Sigmoid colon (tissue), 7 donors: ENCODE measurements at regions of chr9 and their contacts with region 1.

Region 1: GRCh38 chr9:70484210-70485130 is 70.0 kb upstream of the KLF9 start:
- DNase-seq: peak; percentile 80
- H3K4me3 ChIP-seq: no peak overlapping the region
- H3K27ac ChIP-seq: peak overlapping the region; percentile 67 to 98 (median 92)
- H3K4me1 ChIP-seq: peaks cover 4 to 88% (median 76%) of the 10 kb centered on the region in 4 donors
- H3K27me3 ChIP-seq: no peaks in the 10 kb centered on the region
- CTCF ChIP-seq: peak in 3 of 4 experiments; percentile 73 to 85 (median 81)
- EP300 ChIP-seq: peak in 1 of 4 donors; percentile 15
- POLR2A ChIP-seq: no peak

Region 2: GRCh38 chr9:69186841-69187611 is 1297.4 kb before region 1 on chr9:
- intact Hi-C with region 1: no loop called
- DNase-seq: no peak
- H3K4me3 ChIP-seq: no peak overlapping the region
- H3K27ac ChIP-seq: peak overlapping the region in 3 of 4 donors; percentile 31 to 80 (median 41)
- H3K4me1 ChIP-seq: peaks cover 2 to 39% (median 23%) of the 10 kb centered on the region in 4 donors
- H3K27me3 ChIP-seq: no peaks in the 10 kb centered on the region
- CTCF ChIP-seq: no peak
- EP300 ChIP-seq: no peak
- POLR2A ChIP-seq: no peak

Region 3: GRCh38 chr9:70080481-70081119 is 403.9 kb before region 1 on chr9:
- intact Hi-C with region 1: loop called (anchors 10 kb)
- DNase-seq: peak; percentile 78
- H3K4me3 ChIP-seq: no peak overlapping the region
- H3K27ac ChIP-seq: peak overlapping the region; percentile 85 to 98 (median 89)
- H3K4me1 ChIP-seq: peaks cover 0 to 100% (median 91%) of the 10 kb centered on the region in 4 donors
- H3K27me3 ChIP-seq: no peaks in the 10 kb centered on the region
- CTCF ChIP-seq: no peak
- EP300 ChIP-seq: peak in 1 of 4 donors; percentile 17
- POLR2A ChIP-seq: no peak

Region 4: GRCh38 chr9:70352802-70353201 is 131.7 kb before region 1 on chr9:
- intact Hi-C with region 1: loop called (anchors 5 kb)
- DNase-seq: no peak
- H3K4me3 ChIP-seq: no peak overlapping the region
- H3K27ac ChIP-seq: peak overlapping the region; percentile 14 to 51 (median 34)
- H3K4me1 ChIP-seq: peaks cover 0 to 10% (median 4%) of the 10 kb centered on the region in 4 donors
- H3K27me3 ChIP-seq: no peaks in the 10 kb centered on the region
- CTCF ChIP-seq: peak; percentile 70 to 91 (median 72)
- EP300 ChIP-seq: no peak
- POLR2A ChIP-seq: no peak

Region 5: GRCh38 chr9:70534061-70534460 is 49.6 kb after region 1 on chr9:
- intact Hi-C with region 1: no loop called
- DNase-seq: no peak
- H3K4me3 ChIP-seq: no peak overlapping the region
- H3K27ac ChIP-seq: no peak overlapping the region
- H3K4me1 ChIP-seq: no peaks in the 10 kb centered on the region
- H3K27me3 ChIP-seq: no peaks in the 10 kb centered on the region
- CTCF ChIP-seq: no peak
- EP300 ChIP-seq: no peak
- POLR2A ChIP-seq: no peak

Region 6: GRCh38 chr9:70589571-70590314 is 105.3 kb after region 1 on chr9:
- intact Hi-C with region 1: loop called (anchors 2 kb)
- DNase-seq: peak; percentile 88
- H3K4me3 ChIP-seq: no peak overlapping the region
- H3K27ac ChIP-seq: peak overlapping the region; percentile 84 to 95 (median 88)
- H3K4me1 ChIP-seq: peaks cover 0 to 65% (median 54%) of the 10 kb centered on the region in 4 donors
- H3K27me3 ChIP-seq: no peaks in the 10 kb centered on the region
- CTCF ChIP-seq: no peak
- EP300 ChIP-seq: peak in 3 of 4 donors; percentile 79 to 92 (median 85)
- POLR2A ChIP-seq: no peak

Region 7: GRCh38 chr9:72364679-72365524 is 1880.4 kb after region 1 on chr9 and contains the start of gene ZFAND5:
- intact Hi-C with region 1: loop called (anchors 10 kb)
- DNase-seq: peak; percentile 100
- H3K4me3 ChIP-seq: peak within 1 kb of the TSS; percentile 73 to 96 (median 88)
- H3K27ac ChIP-seq: peak within 1 kb of the TSS; percentile 99 to 100 (median 100)
- H3K4me1 ChIP-seq: peaks cover 0 to 28% (median 26%) of the 10 kb centered on the region in 4 donors
- H3K27me3 ChIP-seq: no peaks in the 10 kb centered on the region
- CTCF ChIP-seq: no peak
- EP300 ChIP-seq: peak in 2 of 4 donors; percentile 71 to 74
- POLR2A ChIP-seq: peak; percentile 94 to 97
- total RNA-seq, gene ZFAND5: 126 to 307 (median 177) TPM